SK-N-SH (cell line): ENCODE measurements at regions of chr22 and their contacts with region 1.

Region 1: GRCh38 chr22:24189249-24190158 is 8.2 kb downstream of the SUSD2 start:
- DNase-seq: peak; percentile 95
- H3K4me3 ChIP-seq: no peak overlapping the region; a peak in 1 of 4 replicates
- H3K27ac ChIP-seq: no peak overlapping the region; a peak in 1 of 4 replicates
- H3K4me1 ChIP-seq: peaks cover 0 to 15% of the 10 kb centered on the region in 2 experiments; a peak in 1 of 4 replicates
- H3K27me3 ChIP-seq: no peaks in the 10 kb centered on the region
- CTCF ChIP-seq: peak; percentile 95
- EP300 ChIP-seq: no peak
- RAD21 ChIP-seq: peak; percentile 96

Region 2: GRCh38 chr22:24099666-24100065 is 89.8 kb before region 1 on chr22:
- CTCF ChIA-PET with region 1: no interaction called
- POLR2A ChIA-PET with region 1: no interaction called
- DNase-seq: no peak
- H3K4me3 ChIP-seq: no peak overlapping the region
- H3K27ac ChIP-seq: no peak overlapping the region
- H3K4me1 ChIP-seq: no peaks in the 10 kb centered on the region
- H3K27me3 ChIP-seq: no peaks in the 10 kb centered on the region
- CTCF ChIP-seq: no peak
- EP300 ChIP-seq: no peak
- RAD21 ChIP-seq: no peak

Region 3: GRCh38 chr22:24137595-24137994 is 51.9 kb before region 1 on chr22:
- CTCF ChIA-PET with region 1: no interaction called
- POLR2A ChIA-PET with region 1: no interaction called
- DNase-seq: no peak
- H3K4me3 ChIP-seq: no peak overlapping the region
- H3K27ac ChIP-seq: peak overlapping the region; percentile 26 to 66; a peak in 2 of 4 replicates
- H3K4me1 ChIP-seq: peaks cover 10 to 18% of the 10 kb centered on the region in 2 experiments; a peak in 1 of 4 replicates
- H3K27me3 ChIP-seq: no peaks in the 10 kb centered on the region
- CTCF ChIP-seq: no peak
- EP300 ChIP-seq: no peak
- RAD21 ChIP-seq: no peak

Region 4: GRCh38 chr22:24156913-24157821 is 32.3 kb before region 1 on chr22:
- CTCF ChIA-PET with region 1: interaction called, 14 read pairs
- POLR2A ChIA-PET with region 1: no interaction called
- DNase-seq: peak; percentile 94
- H3K4me3 ChIP-seq: peak overlapping the region; percentile 75 to 78
- H3K27ac ChIP-seq: peak overlapping the region; percentile 35 to 39; a peak in 3 of 4 replicates
- H3K4me1 ChIP-seq: peaks cover 15 to 41% of the 10 kb centered on the region in 2 experiments; a peak in 3 of 4 replicates
- H3K27me3 ChIP-seq: no peaks in the 10 kb centered on the region
- CTCF ChIP-seq: peak; percentile 94
- EP300 ChIP-seq: no peak
- RAD21 ChIP-seq: peak; percentile 40

Region 5: GRCh38 chr22:24175160-24175808 is 14.2 kb before region 1 on chr22:
- CTCF ChIA-PET with region 1: interaction called, 24 read pairs
- POLR2A ChIA-PET with region 1: no interaction called
- DNase-seq: peak; percentile 91
- H3K4me3 ChIP-seq: no peak overlapping the region
- H3K27ac ChIP-seq: no peak overlapping the region; a peak in 1 of 4 replicates
- H3K4me1 ChIP-seq: peaks cover 0 to under 1% of the 10 kb centered on the region in 2 experiments; a peak in 1 of 4 replicates
- H3K27me3 ChIP-seq: no peaks in the 10 kb centered on the region
- CTCF ChIP-seq: peak; percentile 80
- EP300 ChIP-seq: no peak
- RAD21 ChIP-seq: peak; percentile 86

Region 6: GRCh38 chr22:24214467-24215285 is 25.2 kb after region 1 on chr22:
- CTCF ChIA-PET with region 1: interaction called, 10 read pairs
- POLR2A ChIA-PET with region 1: no interaction called
- DNase-seq: peak; percentile 4
- H3K4me3 ChIP-seq: no peak overlapping the region
- H3K27ac ChIP-seq: no peak overlapping the region
- H3K4me1 ChIP-seq: no peaks in the 10 kb centered on the region
- H3K27me3 ChIP-seq: no peaks in the 10 kb centered on the region
- CTCF ChIP-seq: no peak
- EP300 ChIP-seq: no peak
- RAD21 ChIP-seq: no peak

Region 7: GRCh38 chr22:24236656-24237055 is 47.2 kb after region 1 on chr22:
- CTCF ChIA-PET with region 1: interaction called, 11 read pairs
- POLR2A ChIA-PET with region 1: no interaction called
- DNase-seq: peak; percentile 47
- H3K4me3 ChIP-seq: no peak overlapping the region
- H3K27ac ChIP-seq: no peak overlapping the region
- H3K4me1 ChIP-seq: peaks cover 0 to 4% of the 10 kb centered on the region in 2 experiments; a peak in 2 of 4 replicates
- H3K27me3 ChIP-seq: no peaks in the 10 kb centered on the region
- CTCF ChIP-seq: no peak
- EP300 ChIP-seq: no peak
- RAD21 ChIP-seq: no peak

Region 8: DNA sequence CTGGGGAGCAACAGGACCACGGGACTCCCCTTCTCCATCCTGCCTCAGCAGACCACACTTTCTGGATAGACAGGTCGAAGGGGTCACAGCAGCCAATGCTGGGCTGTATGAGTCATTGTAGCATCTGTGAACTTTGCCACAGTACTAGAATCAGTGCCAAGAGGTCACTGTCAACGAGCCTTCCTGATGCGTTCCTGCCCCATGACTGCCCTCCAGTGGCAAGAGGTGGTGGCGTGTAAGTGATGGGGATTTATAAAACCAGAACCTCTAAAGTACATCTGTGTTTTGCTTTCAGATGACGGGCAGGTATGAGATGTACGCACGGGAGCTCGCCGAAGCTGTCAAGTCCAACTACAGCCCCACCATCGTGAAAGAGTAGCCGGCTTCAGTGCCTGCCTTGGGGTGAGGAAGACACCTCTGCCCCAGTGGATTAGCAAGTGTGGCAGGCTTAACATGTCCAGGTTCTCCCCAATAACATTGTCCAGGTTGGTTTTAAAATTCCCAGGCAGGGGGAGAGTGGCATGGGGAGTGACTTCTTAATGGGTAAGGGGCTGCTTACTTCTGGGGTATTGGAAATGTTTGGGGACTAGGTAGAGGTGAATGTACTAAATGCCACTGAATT is 336.0 kb after region 1 on chr22:
- CTCF ChIA-PET with region 1: interaction called, 36 read pairs
- POLR2A ChIA-PET with region 1: no interaction called
- DNase-seq: peak; percentile 77
- H3K4me3 ChIP-seq: no peak overlapping the region; a peak in 1 of 4 replicates
- H3K27ac ChIP-seq: no peak overlapping the region; a peak in 1 of 4 replicates
- H3K4me1 ChIP-seq: peaks cover 10 to 47% of the 10 kb centered on the region in 2 experiments; a peak in 2 of 4 replicates
- H3K27me3 ChIP-seq: no peaks in the 10 kb centered on the region
- CTCF ChIP-seq: peak; percentile 93
- EP300 ChIP-seq: no peak
- RAD21 ChIP-seq: peak; percentile 88